ENCODE measurements at regions of chr4 and their contacts with region 1.

Region 1: DNA sequence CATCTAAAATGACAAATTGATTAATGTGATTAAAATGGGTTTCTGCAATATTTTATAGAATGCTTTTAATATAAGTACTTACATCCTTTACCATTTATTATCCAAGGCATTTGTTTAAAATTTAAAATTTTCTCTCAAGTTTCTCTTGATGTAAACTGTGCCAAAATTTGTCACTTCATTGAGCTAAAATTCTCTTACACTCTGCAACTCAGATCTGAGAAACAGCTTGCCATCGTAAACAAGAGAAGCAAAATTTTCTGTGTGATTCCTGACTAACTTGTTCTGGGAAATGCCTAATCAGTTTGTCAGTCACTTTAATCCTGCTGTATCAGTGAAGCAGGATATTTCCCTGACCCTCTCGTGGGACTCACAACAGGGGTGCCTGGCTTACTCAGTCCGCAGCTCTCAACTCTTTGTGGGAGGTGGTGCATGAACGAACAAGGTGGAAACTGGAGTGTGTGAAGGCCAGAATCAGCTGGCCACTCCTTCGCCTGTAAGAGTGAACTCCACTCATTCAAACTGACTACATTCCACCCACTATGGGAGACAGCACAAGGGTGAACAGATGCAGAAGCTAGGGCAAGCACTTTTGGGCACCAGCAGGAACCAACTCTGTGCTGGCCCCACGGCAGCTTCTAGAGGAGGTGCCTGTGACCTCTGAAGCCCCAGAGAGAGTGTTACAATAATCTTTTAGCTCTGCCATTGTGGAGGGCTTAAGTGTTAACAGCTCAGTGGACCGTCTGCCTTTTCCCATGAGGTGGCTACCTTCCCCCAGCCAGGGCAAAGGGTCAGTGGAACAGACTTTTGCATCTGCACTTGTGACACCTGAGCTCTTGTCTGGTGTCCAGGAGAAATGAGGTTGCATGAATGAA is 349.4 kb downstream of the FAT4 start:
- DNase-seq: no peak
- H3K4me3 ChIP-seq: no peak overlapping the region
- CTCF ChIP-seq: no peak
- POLR2A ChIP-seq: no peak

Region 2: DNA sequence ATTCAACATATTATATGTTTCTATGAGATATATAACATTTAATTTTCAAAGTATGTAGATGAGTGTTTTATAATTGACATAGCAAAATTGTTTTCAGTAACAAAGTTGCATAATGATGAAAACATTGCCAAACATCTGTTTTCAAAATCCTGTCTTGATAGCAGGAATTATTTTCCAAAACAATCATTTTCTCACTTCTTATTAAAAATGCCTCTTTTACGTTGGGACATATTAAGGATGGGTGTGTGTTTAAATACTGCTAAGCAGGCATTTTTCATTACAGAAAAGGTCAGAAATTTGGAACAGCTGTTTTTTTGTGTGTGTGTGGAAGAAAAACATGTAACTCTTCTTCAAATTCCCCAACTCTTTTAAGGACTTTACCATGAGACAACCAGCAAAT is 1815.5 kb before region 1 on chr4:
- intact Hi-C with region 1: loop called (anchors 10 kb)
- DNase-seq: no peak
- H3K4me3 ChIP-seq: no peak overlapping the region
- CTCF ChIP-seq: no peak
- POLR2A ChIP-seq: no peak

Region 3: DNA sequence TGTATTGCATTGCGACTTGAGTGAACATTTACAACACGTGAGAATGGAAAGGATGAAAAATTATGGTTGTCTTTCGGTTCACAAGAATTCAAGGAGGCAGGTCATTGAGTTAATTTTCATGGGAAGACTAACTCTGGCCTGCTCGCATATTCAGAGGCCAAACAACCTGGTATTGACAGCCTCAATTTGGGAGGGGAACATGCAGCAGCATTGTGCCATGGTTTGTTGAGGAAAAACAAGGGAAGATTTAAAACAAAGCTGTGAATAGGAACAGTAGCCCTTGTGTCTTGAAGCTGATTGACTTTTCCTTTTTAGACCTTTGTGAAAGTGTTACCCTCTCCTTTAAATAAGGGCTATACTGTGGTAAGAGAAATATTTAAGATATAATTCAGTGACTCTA is 317.5 kb before region 1 on chr4:
- intact Hi-C with region 1: no loop called
- DNase-seq: no peak
- H3K4me3 ChIP-seq: no peak overlapping the region
- CTCF ChIP-seq: no peak
- POLR2A ChIP-seq: no peak

Measured in lower leg skin (tissue), 4 donors.